Mammary epithelial cell (primary cell): ENCODE measurements at regions of chr15 and their contacts with region 1.

Region 1: DNA sequence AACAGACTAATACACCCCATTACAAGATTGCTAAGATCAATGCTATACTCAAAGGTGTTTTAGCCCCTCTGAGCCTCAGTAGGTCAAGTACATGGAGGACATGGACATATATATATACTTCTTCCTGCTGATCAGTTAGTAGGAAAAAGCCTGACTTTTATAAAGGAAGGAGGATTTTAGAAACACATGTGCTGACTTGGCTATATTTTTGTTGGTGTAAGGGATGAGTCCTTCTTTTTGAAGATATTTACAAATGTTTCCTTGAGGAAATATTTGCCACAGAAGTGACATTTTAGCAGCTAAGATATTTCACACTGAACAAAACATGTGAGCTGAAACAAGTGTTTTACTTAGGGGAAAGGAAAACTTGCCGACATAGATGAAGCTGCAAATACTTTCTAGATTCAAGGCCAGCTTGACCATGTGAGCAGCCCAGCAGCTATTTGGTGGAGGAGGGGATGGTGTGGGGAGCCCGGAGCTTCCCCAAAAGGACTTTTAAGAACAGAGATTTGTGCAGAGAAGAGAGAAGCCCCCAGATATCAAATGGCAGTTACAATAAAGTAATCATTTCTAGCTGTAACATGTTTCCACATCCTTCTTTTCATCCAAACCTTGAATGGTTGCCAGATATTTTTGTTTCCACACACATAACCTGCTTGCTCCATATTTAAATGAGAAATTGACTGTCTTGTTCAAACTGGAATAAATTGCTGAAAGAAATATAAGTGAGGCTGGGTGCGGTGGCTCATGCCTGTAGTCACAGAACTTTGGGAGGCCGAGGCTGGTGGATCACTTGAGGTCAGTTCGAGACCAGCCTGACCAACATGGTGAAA is 111.7 kb upstream of the NR2F2 start:
- DNase-seq: no peak
- H3K4me3 ChIP-seq: no peak overlapping the region
- H3K27ac ChIP-seq: no peak overlapping the region
- H3K4me1 ChIP-seq: no peaks in the 10 kb centered on the region
- H3K27me3 ChIP-seq: no peaks in the 10 kb centered on the region
- CTCF ChIP-seq: no peak

Region 2: DNA sequence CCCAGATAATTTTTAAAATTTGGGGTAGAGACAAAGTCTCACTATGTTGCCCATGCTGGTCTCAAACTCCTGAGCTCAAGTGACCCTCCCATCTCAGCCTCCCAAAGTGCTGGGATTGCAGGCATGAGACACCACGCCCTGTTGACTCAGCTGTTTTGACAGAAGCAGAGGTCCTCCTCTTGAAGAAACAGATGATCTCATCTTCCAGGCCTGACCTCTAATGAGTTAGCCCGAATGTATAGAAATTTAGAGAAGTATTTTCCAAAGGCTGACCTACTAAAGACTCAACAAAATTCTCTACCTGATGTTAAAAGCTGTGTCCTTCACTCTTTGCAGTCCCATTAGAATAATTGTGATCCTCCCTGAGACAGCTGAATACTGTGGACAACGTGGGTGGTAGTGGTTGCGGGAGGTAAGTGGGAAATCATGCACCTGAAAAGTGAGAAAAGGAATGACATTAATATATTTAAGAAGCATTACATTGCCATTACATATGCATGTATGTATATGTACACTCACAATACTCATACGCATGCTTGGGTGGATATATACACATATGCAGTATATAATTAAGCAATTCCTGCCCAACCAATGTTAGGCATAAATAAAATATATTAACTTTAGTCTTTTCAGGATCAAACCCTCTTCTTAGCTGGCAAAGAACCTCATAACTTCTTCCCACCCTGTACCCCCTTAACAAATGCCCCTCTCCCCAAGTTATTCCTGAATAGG is 93.0 kb before region 1 on chr15:
- CTCF ChIA-PET with region 1: no interaction called
- dilution Hi-C with region 1: loop called (anchors 5 kb)
- in situ Hi-C with region 1: no loop called
- intact Hi-C with region 1: no loop called
- DNase-seq: peak; percentile 49
- H3K4me3 ChIP-seq: no peak overlapping the region
- H3K27ac ChIP-seq: no peak overlapping the region
- H3K4me1 ChIP-seq: peaks cover 4% of the 10 kb centered on the region
- H3K27me3 ChIP-seq: no peaks in the 10 kb centered on the region
- CTCF ChIP-seq: no peak

Region 3: GRCh38 chr15:97234851-97235610 is 1016.2 kb after region 1 on chr15:
- CTCF ChIA-PET with region 1: interaction called, 22 read pairs
- dilution Hi-C with region 1: no loop called
- in situ Hi-C with region 1: no loop called
- intact Hi-C with region 1: no loop called
- DNase-seq: peak; percentile 35
- H3K4me3 ChIP-seq: no peak overlapping the region
- H3K27ac ChIP-seq: no peak overlapping the region
- H3K4me1 ChIP-seq: no peaks in the 10 kb centered on the region
- H3K27me3 ChIP-seq: no peaks in the 10 kb centered on the region
- CTCF ChIP-seq: peak; percentile 87 to 88